Gastrocnemius medialis (tissue), 4 donors: ENCODE measurements at regions of chr12 and their contacts with region 1.

Region 1: GRCh38 chr12:90253674-90254181 is 545.1 kb upstream of the ATP2B1 start:
- DNase-seq: peak; percentile 87 to 89
- ATAC-seq: peak; percentile 94 to 96
- H3K4me3 ChIP-seq: no peak overlapping the region
- H3K27ac ChIP-seq: peak overlapping the region; percentile 75 to 88 (median 78)
- H3K4me1 ChIP-seq: peaks cover 40 to 52% of the 10 kb centered on the region in 2 donors
- H3K27me3 ChIP-seq: no peaks in the 10 kb centered on the region
- CTCF ChIP-seq: peak in 2 of 5 experiments; percentile 27 to 39
- POLR2A ChIP-seq: no peak

Region 2: DNA sequence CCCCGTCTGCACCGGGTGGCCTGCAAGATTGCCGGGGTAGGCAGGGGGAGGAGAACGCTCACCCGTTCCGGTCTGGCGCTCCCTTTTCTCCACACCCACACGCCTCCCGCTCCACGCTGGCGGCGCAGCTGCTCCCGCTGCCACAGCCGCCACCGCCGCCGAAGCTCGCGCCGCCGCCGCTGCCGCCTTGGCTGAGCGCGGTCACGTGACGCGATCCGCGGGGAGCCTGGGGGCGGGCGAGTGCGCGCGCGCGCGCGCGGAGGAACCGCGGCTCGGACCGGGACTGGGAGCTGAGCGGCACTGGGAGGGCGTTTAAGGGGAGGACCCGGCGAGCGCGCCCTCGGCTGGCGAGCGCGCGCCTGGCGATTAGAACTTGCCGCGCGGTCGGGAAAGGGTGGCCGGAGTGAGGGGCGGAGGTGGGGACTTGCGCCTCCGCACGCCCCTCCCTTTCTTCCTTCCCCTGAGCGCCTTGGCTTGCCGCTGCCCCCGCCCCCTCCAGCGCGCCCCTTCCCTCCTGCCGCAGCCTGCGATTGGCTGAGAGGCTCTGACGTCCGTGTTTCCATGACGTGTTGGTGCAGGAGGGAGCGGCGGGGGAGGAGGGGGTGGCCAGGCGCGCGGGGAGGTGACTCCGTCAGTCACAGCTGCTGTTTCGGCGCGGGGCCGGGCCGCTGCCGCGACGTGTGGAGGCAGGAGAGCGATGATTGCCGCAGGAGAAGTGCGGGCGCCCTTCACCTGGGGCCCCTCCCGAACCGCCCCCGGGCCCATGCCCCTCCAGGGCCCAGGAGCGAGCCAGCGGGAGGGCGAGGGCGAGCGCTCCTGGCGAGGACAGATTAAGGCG is 544.4 kb before region 1 on chr12:
- in situ Hi-C with region 1: no loop called
- intact Hi-C with region 1: loop called (anchors 1 kb)
- DNase-seq: peak; percentile 98 to 99
- ATAC-seq: peak; percentile 82 to 84
- H3K4me3 ChIP-seq: peak overlapping the region; percentile 76 to 96 (median 92)
- H3K27ac ChIP-seq: peak overlapping the region; percentile 97 to 99 (median 98)
- H3K4me1 ChIP-seq: peaks cover 18 to 34% of the 10 kb centered on the region in 2 donors
- H3K27me3 ChIP-seq: no peaks in the 10 kb centered on the region
- CTCF ChIP-seq: peak in 2 of 5 experiments; percentile 42 to 59
- POLR2A ChIP-seq: peak; percentile 97 to 98

Region 3: GRCh38 chr12:90064852-90065801 is 188.6 kb before region 1 on chr12:
- in situ Hi-C with region 1: no loop called
- intact Hi-C with region 1: loop called (anchors 5 kb)
- DNase-seq: no peak
- ATAC-seq: no peak
- H3K4me3 ChIP-seq: no peak overlapping the region
- H3K27ac ChIP-seq: no peak overlapping the region
- H3K4me1 ChIP-seq: peaks cover 6 to 21% of the 10 kb centered on the region in 2 donors
- H3K27me3 ChIP-seq: no peaks in the 10 kb centered on the region
- CTCF ChIP-seq: no peak
- POLR2A ChIP-seq: no peak

Region 4: GRCh38 chr12:90368081-90368480 is 114.4 kb after region 1 on chr12:
- in situ Hi-C with region 1: no loop called
- intact Hi-C with region 1: no loop called
- DNase-seq: no peak
- ATAC-seq: no peak
- H3K4me3 ChIP-seq: no peak overlapping the region
- H3K27ac ChIP-seq: no peak overlapping the region
- H3K4me1 ChIP-seq: no peaks in the 10 kb centered on the region
- H3K27me3 ChIP-seq: no peaks in the 10 kb centered on the region
- CTCF ChIP-seq: no peak
- POLR2A ChIP-seq: no peak